Transverse colon (tissue), 4 donors: ENCODE measurements at regions of chr9 and their contacts with region 1.

Region 1: DNA sequence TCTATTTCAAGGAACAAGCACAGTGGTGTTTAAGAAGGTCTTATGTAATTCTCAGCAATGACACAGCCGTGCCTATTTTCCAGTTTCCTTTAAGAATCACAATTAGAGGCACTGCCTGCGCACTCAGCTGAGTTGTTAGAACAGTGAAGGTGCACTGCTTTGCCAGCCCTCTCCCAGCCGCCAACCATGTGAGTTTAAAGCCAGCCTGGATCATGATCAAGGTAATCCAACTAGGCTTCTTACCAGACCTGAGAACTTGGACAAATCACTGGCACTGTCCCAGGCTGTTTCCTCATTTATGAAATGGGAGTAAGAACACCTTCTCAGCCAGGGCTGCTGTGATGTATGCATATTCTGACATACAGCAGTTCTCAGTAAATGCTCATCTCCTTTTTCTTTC is 99.6 kb downstream of the ASTN2 start:
- DNase-seq: no peak
- H3K4me3 ChIP-seq: no peak overlapping the region
- H3K27ac ChIP-seq: no peak overlapping the region
- H3K4me1 ChIP-seq: no peaks in the 10 kb centered on the region
- H3K27me3 ChIP-seq: no peaks in the 10 kb centered on the region
- CTCF ChIP-seq: no peak
- EP300 ChIP-seq: no peak
- POLR2A ChIP-seq: no peak

Region 2: DNA sequence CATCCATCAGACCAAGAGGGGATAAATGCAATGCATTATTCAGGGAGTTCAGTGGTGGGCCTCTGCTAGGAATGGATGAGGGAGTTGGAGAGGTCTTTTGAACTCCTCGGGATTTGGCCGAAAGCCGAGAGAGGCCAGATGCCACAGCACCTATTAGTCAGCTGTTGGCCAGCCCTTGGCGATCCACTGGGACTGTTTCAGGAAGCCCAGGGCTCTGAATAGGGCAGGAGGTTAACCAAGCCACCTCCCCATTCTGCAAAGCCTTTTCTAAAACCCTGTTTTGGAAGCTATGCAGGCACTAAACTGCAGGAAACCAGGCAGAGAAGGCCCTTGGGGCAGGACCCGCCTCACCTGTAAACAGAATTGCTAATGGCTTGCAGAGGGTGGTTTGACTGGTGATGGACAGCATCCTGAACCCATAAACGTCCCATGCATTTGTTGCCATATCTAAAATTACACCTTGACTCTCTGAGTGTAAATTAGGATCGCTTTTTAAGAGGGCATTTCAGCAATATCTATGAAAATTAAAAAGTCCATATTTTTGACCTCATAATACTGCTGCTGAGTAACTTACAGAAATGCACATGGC is 61.9 kb after region 1 on chr9:
- in situ Hi-C with region 1: loop called in 1 of 4 experiments (anchors 10 kb)
- intact Hi-C with region 1: no loop called
- DNase-seq: no peak
- H3K4me3 ChIP-seq: no peak overlapping the region
- H3K27ac ChIP-seq: no peak overlapping the region
- H3K4me1 ChIP-seq: no peaks in the 10 kb centered on the region
- H3K27me3 ChIP-seq: no peaks in the 10 kb centered on the region
- CTCF ChIP-seq: no peak
- EP300 ChIP-seq: no peak
- POLR2A ChIP-seq: no peak